Mammary epithelial cell (primary cell): ENCODE measurements at regions of chr12 and their contacts with region 1.

Region 1: DNA sequence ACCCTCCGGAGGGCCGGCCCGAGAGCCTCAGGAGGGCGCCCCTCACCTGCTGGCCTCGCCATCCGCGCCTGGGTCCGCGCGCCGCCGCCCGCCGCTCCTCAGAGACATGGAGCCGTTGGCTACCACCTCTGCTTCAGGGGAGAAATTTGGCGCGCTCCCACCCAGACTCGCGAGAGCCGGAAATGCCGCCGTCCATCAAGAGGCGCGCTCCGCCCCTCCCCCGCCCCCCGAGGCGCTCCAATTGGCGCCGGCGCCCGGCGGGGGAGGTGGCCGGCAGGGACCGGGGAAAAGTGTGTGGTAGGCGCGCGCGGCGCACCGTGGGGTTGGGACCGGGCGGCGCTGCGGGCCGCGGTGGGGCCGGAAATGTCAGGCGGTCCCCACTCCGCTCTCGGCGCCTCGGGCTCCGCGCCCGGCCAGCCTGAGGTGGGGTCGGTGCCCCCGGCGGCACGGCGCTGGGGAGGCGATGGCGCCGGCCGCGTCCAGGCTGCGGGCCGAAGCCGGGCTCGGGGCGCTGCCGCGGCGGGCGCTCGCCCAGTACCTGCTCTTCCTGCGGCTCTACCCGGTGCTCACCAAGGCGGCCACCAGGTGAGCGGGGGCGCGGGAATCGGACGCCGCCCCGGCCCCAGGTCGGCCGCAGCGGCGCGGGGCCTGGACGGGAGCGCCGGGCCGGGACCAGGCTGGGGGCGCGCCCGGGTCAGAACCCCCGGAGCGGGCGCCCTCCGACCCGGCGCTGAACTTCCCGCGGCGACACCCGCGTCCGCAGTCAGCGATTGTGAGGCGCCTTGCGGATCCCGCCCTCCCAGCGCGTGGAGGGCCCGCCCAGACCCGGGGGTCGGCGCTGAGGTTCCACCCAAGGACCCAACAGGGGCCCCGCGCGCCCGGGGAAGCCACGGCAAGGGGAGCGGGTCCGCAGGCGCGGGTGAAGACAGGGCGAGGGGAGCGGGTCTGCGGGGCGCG is at the starts of genes POLE and PXMP2:
- DNase-seq: peak; percentile 95
- H3K4me3 ChIP-seq: peak within 1 kb of the TSS; percentile 59 to 68 (median 67)
- H3K27ac ChIP-seq: peak within 1 kb of the TSS; percentile 70
- H3K4me1 ChIP-seq: peaks cover 9% of the 10 kb centered on the region
- H3K27me3 ChIP-seq: no peaks in the 10 kb centered on the region
- CTCF ChIP-seq: no peak
- total RNA-seq, gene POLE: 13.7 to 67.7 TPM
- total RNA-seq, gene PXMP2: 11.3 to 27.2 TPM

Region 2: GRCh38 chr12:132710422-132711168 is 23.1 kb after region 1 on chr12 and contains the start of gene PGAM5:
- CTCF ChIA-PET with region 1: no interaction called
- dilution Hi-C with region 1: no loop called
- in situ Hi-C with region 1: no loop called
- intact Hi-C with region 1: loop called (anchors 2 kb)
- DNase-seq: peak; percentile 91
- H3K4me3 ChIP-seq: peak within 1 kb of the TSS; percentile 79 to 94 (median 86)
- H3K27ac ChIP-seq: peak within 1 kb of the TSS; percentile 54
- H3K4me1 ChIP-seq: peaks cover 9% of the 10 kb centered on the region
- H3K27me3 ChIP-seq: no peaks in the 10 kb centered on the region
- CTCF ChIP-seq: no peak
- total RNA-seq, gene PGAM5: 51.2 to 56.4 TPM

Region 3: GRCh38 chr12:132761032-132761920 is 73.8 kb after region 1 on chr12 and contains the start of gene ANKLE2:
- CTCF ChIA-PET with region 1: no interaction called
- dilution Hi-C with region 1: no loop called
- in situ Hi-C with region 1: no loop called
- intact Hi-C with region 1: loop called (anchors 2 kb)
- DNase-seq: peak; percentile 61
- H3K4me3 ChIP-seq: peak within 1 kb of the TSS; percentile 83 to 96 (median 94)
- H3K27ac ChIP-seq: peak within 1 kb of the TSS; percentile 100
- H3K4me1 ChIP-seq: peaks cover 12% of the 10 kb centered on the region
- H3K27me3 ChIP-seq: no peaks in the 10 kb centered on the region
- CTCF ChIP-seq: no peak
- total RNA-seq, gene ANKLE2: 90.9 to 163 TPM

Region 4: GRCh38 chr12:132956011-132956788 is 268.7 kb after region 1 on chr12 and contains the start of gene ZNF605:
- CTCF ChIA-PET with region 1: no interaction called
- dilution Hi-C with region 1: no loop called
- in situ Hi-C with region 1: no loop called
- intact Hi-C with region 1: loop called (anchors 5 kb)
- DNase-seq: peak; percentile 83
- H3K4me3 ChIP-seq: peak within 1 kb of the TSS; percentile 85 to 100 (median 88)
- H3K27ac ChIP-seq: peak within 1 kb of the TSS; percentile 64
- H3K4me1 ChIP-seq: peaks cover 8% of the 10 kb centered on the region
- H3K27me3 ChIP-seq: no peaks in the 10 kb centered on the region
- CTCF ChIP-seq: no peak
- total RNA-seq, gene ZNF605: 13.3 to 14.4 TPM

Region 5: GRCh38 chr12:132972374-132972773 is 284.9 kb after region 1 on chr12:
- CTCF ChIA-PET with region 1: no interaction called
- dilution Hi-C with region 1: no loop called
- in situ Hi-C with region 1: no loop called
- intact Hi-C with region 1: no loop called
- DNase-seq: no peak
- H3K4me3 ChIP-seq: no peak overlapping the region
- H3K27ac ChIP-seq: no peak overlapping the region
- H3K4me1 ChIP-seq: no peaks in the 10 kb centered on the region
- H3K27me3 ChIP-seq: no peaks in the 10 kb centered on the region
- CTCF ChIP-seq: no peak